PC-3 (cell line): ENCODE measurements at regions of chr3 and their contacts with region 1.

Region 1: DNA sequence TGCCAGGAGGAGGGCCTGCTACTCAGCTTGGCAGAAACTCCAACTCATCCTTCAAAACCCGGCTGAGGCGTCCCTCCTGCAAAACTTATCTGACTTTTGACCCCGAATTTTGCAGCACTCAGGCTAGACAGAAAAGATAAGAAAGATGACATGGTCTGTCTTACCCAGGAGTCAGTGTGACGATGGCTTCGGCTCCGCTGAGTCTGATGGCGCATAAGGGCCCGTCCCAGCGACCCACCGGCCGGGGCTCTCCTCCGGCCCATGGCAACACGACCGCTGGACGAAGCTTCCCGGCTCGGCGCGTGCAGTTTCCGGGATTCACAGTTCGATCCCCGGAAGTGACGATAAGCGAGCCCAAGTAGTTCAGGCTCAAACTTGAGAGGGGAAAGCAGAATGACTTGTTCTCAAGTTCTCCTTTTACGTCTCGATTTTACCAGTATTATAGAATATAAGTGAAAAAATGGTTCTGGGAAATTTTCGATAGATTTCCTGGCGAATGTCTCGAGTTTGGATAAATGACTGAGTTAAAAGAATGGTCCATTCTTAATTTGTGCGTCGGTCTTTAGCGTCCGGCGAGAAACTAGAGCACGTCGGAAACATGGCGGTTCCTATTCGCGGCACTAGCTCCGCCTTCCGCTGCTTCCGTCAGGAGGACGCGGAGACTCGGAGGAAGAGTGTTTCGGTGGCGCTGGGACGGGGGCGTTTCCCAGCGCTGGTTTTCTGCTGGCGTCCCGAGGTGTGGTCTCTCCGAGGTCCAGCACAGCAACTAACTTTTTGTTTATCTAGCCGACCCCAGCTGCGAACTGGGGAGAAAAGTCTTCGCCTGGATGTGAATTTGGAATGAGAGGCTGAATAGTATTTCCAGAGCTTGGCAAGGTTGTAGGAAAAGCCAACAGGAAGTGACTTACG is at the start of gene LSG1:
- DNase-seq: peak; percentile 97
- ATAC-seq: peak; percentile 96
- H3K4me3 ChIP-seq: peak within 1 kb of the TSS; percentile 87
- H3K27ac ChIP-seq: peak within 1 kb of the TSS; percentile 71
- H3K4me1 ChIP-seq: peaks cover 14% of the 10 kb centered on the region
- H3K27me3 ChIP-seq: no peaks in the 10 kb centered on the region
- CTCF ChIP-seq: no peak
- total RNA-seq, gene LSG1: 83.8 and 102 TPM in 2 replicates

Region 2: DNA sequence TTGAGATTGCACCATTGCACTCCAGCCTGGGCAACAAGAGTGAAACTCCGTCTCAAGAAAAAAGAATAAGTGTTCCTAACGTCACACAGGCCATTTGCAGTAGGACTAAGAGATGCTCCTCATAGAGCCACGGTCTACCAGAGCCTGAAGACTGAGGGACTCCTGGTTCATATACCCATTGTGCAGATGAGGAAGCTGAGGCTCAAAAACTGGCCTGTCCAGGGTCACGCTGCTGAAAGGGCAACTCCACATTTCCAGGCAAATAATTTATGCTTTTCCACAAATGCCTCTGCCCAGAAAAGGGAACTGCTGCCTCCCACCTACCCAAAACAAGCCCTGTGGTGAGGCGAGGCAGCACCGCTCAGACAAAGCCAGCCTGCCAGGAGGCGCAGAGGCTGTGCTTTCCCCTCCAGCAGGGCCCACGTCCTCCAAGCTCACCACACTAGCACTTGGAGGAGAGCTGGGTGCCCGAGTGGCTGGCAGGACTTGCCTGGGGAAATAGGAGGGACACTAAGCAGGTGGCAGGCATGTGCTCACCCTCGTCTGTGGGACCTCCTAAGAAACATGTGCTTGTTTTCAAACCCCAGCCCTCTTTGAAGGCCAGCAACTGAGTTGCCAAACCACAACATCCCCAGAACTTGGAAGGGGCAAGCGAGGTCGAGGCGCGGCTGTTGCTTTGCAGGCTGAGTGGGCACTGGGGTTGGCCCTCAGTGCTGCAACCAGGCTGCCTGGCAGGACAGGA is 403.2 kb after region 1 on chr3:
- CTCF ChIA-PET with region 1: no interaction called
- POLR2A ChIA-PET with region 1: no interaction called
- intact Hi-C with region 1: no loop called
- DNase-seq: no peak
- ATAC-seq: no peak
- H3K4me3 ChIP-seq: no peak overlapping the region
- H3K27ac ChIP-seq: no peak overlapping the region
- H3K4me1 ChIP-seq: no peaks in the 10 kb centered on the region
- H3K27me3 ChIP-seq: no peaks in the 10 kb centered on the region
- CTCF ChIP-seq: no peak

Region 3: DNA sequence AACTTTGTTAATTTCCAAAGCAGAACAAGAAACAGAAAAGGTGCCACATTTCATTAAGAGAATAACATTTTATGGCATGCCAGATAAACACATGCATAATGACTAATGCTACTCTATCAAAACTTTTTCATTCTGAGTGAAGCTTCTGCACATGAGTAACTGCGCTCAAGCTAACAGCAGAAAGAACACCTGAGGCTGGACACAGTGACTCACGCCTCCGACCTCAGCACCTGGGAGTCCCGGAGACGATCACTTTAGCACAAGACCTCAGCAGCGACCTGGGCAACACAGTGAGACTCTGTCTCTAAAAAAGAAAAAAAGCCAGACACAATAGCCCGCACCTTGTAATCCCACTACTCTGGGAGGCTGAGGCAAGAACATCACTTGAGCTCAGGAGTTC is 700.1 kb after region 1 on chr3:
- CTCF ChIA-PET with region 1: interaction called, 12 read pairs
- POLR2A ChIA-PET with region 1: no interaction called
- intact Hi-C with region 1: no loop called
- DNase-seq: peak; percentile 12
- ATAC-seq: peak; percentile 54
- H3K4me3 ChIP-seq: no peak overlapping the region
- H3K27ac ChIP-seq: no peak overlapping the region
- H3K4me1 ChIP-seq: no peaks in the 10 kb centered on the region
- H3K27me3 ChIP-seq: no peaks in the 10 kb centered on the region
- CTCF ChIP-seq: no peak